ENCODE measurements at regions of chr6 and their contacts with region 1.

Region 1: DNA sequence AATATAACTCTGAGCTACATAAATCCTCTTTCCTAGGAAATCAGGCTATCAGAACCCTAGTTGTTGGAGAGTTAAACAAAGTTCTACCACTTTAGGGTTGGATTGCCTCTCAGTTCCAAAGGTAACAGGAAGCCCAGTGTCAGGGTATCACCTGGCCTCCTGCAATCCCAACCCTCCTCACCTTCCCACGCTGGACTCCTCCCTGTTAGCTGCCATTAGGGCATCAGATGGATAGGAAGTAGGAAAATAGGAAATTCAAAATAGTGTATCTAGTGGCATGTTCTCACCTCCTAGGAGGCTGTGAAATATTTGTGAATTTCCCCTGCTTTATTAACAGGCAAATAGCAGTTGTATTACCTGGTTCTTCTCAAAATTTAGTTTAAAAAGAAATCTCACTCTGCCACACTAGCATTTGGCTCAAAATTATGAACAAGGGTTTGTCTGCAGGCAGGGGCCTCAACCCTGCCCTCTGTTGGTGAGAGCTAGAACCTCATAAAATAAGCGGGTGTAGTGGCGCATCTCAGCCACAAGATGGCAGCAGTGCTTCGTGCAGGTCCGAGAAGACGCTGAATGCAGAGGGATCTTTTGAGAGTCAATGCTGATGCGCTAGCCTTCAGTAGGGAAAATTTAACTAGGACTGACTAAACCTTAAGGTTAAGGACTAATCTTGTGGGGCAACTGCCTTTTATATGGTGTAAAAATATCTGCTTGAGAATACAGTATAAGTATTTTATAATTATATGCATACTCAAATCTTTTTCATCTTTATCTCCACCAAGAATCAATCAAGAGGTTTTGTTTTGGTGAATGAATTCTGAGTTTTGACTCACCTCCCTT is 209.8 kb upstream of the KCNQ5 start:
- DNase-seq: peak; percentile 69 to 82
- H3K4me3 ChIP-seq: no peak overlapping the region
- H3K27ac ChIP-seq: no peak overlapping the region
- H3K4me1 ChIP-seq: no peaks in the 10 kb centered on the region
- H3K27me3 ChIP-seq: peaks cover 0 to 3% of the 10 kb centered on the region in 2 donors
- CTCF ChIP-seq: peak; percentile 100

Region 2: DNA sequence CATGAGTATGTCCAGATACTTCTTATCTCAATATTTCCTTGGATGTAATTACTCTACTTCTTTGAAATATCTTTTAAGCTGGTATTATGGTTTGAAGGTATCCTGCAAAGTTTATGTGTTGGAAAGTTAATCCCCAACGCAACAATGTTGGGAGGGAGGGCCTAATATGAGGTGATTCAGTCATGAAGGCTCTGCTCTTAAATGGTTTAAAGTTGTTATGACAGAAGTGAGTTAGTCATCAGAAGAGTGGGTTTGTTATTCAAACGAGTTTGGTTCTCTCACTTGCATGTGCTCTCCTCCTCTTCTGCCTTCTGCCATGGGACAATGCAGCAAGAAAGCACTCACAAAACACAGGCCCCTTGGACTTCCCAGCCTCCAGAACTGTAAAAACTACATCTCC is 386.1 kb after region 1 on chr6:
- intact Hi-C with region 1: no loop called
- DNase-seq: no peak
- H3K4me3 ChIP-seq: no peak overlapping the region
- H3K27ac ChIP-seq: no peak overlapping the region
- H3K4me1 ChIP-seq: no peaks in the 10 kb centered on the region
- H3K27me3 ChIP-seq: no peaks in the 10 kb centered on the region
- CTCF ChIP-seq: no peak

Region 3: DNA sequence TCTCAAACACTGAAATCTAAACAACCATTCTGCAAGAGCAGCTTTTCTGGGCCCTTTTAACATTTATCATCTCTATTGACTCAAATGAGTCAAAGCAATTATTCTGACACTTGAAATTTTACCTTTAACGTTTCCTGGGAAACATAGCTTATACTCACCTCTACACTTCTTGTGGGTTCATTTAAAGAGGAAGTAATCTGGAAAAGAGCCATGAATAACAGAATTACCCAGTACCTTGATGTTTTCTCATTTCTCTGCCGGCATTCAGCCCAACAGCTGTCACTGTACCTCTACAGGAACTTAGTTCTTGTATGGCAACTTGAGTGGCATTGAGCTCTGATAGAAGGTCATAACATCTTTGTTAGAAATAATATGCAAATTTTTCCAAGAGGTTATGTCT is 482.0 kb after region 1 on chr6:
- intact Hi-C with region 1: no loop called
- DNase-seq: no peak
- H3K4me3 ChIP-seq: no peak overlapping the region
- H3K27ac ChIP-seq: no peak overlapping the region
- H3K4me1 ChIP-seq: no peaks in the 10 kb centered on the region
- H3K27me3 ChIP-seq: no peaks in the 10 kb centered on the region
- CTCF ChIP-seq: no peak

Region 4: GRCh38 chr6:73129653-73130443 is 717.8 kb after region 1 on chr6:
- intact Hi-C with region 1: loop called (anchors 5 kb)
- DNase-seq: peak; percentile 74 to 86
- H3K4me3 ChIP-seq: no peak overlapping the region
- H3K27ac ChIP-seq: no peak overlapping the region
- H3K4me1 ChIP-seq: peaks cover 0 to 10% (median 0%) of the 10 kb centered on the region in 4 donors
- H3K27me3 ChIP-seq: no peaks in the 10 kb centered on the region
- CTCF ChIP-seq: peak; percentile 95 to 99

Region 5: DNA sequence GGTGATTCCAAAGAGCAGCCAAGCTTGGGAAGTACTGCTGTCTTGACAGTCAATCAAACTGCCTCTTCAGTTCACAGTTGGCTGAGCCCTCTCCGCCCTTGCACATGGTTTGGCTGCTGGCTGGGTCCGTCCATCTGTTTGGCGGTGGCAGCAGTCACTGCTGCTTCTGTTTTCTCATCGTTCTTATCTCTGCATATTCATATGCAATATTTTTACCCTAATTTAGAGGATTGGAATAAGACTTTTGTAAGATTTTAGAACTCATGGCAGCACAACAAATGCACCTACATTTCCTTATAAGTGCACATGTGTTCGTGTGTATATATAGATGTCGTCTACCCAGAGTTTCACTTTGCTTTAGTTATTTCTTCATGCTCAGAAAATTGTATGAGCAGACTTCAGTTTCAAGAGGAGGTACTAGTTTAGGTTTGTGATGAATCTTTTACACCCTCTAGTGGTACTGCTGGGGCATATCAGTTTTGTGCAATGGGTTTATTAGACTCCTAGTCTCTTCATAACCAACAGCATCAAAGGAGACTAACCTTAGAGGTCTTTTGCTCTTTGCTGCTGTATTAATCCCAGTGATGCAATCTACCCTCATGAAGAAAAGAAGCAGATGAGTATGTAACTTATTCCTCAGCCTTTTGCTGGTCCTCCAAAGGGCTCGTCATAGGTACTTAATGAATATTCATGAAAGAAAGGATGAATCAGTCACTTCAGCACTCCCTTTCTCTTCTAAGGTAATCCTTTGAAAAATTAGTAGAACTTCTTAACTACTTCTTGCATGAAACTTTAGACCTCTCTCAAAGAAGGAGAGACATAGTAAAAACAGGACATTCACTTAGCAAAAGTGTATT is 768.9 kb after region 1 on chr6:
- intact Hi-C with region 1: loop called (anchors 10 kb)
- DNase-seq: no peak
- H3K4me3 ChIP-seq: peak overlapping the region; percentile 29 to 30
- H3K27ac ChIP-seq: no peak overlapping the region
- H3K4me1 ChIP-seq: no peaks in the 10 kb centered on the region
- H3K27me3 ChIP-seq: no peaks in the 10 kb centered on the region
- CTCF ChIP-seq: peak; percentile 83 to 88